A673 (cell line): ENCODE measurements at regions of chr18 and their contacts with region 1.

Region 1: DNA sequence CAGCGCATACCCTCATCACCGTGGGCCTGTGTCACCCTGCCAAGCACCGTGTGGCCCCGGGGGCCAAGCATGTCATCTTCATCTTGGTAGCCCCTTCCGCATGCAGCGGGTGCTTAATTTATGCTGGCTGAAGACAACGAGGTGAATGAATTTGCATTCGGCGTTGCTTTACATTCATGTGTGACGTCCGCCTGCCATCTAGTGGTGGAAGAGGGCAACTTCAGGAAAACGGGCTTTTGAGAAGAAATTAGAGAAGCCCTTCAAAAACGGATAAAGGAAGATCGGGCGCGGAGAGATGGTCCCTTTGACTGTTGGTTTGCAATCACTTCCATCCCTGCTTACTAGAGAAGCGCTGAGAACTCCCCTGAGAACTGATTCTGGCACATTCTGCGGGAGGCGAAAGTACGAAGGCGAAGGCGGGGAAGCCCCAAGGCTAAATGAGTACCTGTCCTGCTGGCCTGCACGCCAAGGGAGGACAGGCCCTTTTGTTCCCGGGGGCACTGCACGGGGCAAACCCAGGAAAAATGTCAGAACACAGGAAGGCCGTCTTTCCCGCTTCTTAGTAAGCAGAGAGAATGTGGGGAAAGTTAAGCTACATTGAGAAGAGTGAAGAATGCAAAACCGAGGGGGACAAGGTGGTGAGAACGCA is 145.9 kb downstream of the ZNF516 start:
- DNase-seq: peak; percentile 87
- H3K4me3 ChIP-seq: no peak overlapping the region
- H3K27ac ChIP-seq: no peak overlapping the region
- H3K4me1 ChIP-seq: peaks cover 14% of the 10 kb centered on the region
- H3K27me3 ChIP-seq: no peaks in the 10 kb centered on the region
- CTCF ChIP-seq: peak; percentile 91

Region 2: DNA sequence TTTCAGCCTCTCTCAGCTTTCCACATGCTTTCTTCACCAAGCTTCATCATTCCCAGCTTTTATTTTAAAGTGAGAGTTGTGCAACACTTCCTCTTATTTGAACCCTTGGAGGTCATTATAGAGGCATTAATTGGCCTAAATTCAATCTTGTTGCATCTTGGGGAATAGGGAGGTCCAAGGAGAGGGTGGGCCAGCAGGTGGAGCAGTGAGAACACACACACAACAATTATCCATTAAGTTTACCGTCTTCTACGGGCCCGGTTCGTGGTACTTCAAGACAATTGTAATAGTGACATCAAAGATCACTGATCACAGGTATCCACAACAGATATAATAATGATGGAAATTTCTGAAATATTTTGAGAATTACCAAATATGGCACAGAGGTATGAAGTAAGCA is 464.5 kb before region 1 on chr18:
- CTCF ChIA-PET with region 1: no interaction called
- POLR2A ChIA-PET with region 1: no interaction called
- intact Hi-C with region 1: loop called (anchors 10 kb)
- DNase-seq: peak; percentile 12
- H3K4me3 ChIP-seq: no peak overlapping the region
- H3K27ac ChIP-seq: no peak overlapping the region
- H3K4me1 ChIP-seq: no peaks in the 10 kb centered on the region
- H3K27me3 ChIP-seq: no peaks in the 10 kb centered on the region
- CTCF ChIP-seq: peak; percentile 48

Region 3: DNA sequence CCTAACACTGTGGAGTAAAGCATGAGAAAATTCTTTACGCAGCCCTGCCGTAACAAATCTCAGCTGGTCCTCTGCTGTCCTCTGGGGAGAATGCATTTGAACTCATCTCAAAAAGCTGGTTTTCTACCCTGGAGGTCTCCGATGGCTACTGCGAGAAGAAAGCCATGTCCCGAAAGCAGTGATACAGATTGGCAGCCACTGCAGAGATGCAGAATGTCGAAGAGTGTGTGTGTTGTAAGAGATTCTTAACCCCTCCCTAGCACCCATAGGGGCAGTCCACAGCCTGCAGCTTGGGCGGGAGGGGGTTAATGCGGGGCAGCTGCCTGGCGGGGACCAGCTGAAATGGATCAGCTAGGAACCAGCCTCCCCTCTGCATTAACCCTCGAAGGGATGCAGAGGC is 90.1 kb before region 1 on chr18:
- CTCF ChIA-PET with region 1: no interaction called
- POLR2A ChIA-PET with region 1: no interaction called
- intact Hi-C with region 1: loop called (anchors 5 kb)
- DNase-seq: no peak
- H3K4me3 ChIP-seq: no peak overlapping the region
- H3K27ac ChIP-seq: no peak overlapping the region
- H3K4me1 ChIP-seq: peaks cover 7% of the 10 kb centered on the region
- H3K27me3 ChIP-seq: peaks cover 11% of the 10 kb centered on the region
- CTCF ChIP-seq: no peak

Region 4: GRCh38 chr18:78113136-78113939 is 1764.1 kb after region 1 on chr18:
- CTCF ChIA-PET with region 1: no interaction called
- POLR2A ChIA-PET with region 1: no interaction called
- intact Hi-C with region 1: no loop called
- DNase-seq: no peak
- H3K4me3 ChIP-seq: no peak overlapping the region
- H3K27ac ChIP-seq: no peak overlapping the region
- H3K4me1 ChIP-seq: no peaks in the 10 kb centered on the region
- H3K27me3 ChIP-seq: no peaks in the 10 kb centered on the region
- CTCF ChIP-seq: no peak